ENCODE measurements at regions of chr3 and their contacts with region 1.

Region 1: GRCh38 chr3:8128686-8129085 is 372.9 kb upstream of the LMCD1 start:
- DNase-seq: no peak

Region 2: GRCh38 chr3:8400911-8401310 is 272.2 kb after region 1 on chr3:
- intact Hi-C with region 1: loop called in 1 of 2 experiments (anchors 10 kb)
- DNase-seq: no peak

Region 3: DNA sequence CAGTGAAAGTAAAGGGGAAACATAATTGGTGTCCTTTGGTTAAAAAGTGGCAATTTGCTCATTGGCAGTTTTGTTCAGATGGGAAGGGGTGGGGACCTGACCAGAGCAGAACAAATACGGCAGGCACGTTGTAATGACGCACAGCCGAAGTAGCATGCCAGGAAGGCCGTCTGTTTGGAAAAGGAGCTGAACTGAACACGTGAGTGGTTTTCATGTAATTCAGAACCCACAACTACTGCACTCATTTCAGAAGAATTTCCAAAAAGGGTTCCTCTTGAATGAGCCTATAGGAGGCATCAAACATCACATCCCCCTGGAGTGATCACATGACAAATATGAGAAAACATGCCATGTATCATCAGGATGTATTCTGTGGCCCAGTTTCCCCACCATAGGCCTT is 330.0 kb after region 1 on chr3:
- intact Hi-C with region 1: no loop called
- DNase-seq: peak; percentile 90

Measured in posterior vena cava (tissue), 2 donors.